Heart left ventricle (tissue), 16 donors: ENCODE measurements at regions of chr1 and their contacts with region 1.

Region 1: DNA sequence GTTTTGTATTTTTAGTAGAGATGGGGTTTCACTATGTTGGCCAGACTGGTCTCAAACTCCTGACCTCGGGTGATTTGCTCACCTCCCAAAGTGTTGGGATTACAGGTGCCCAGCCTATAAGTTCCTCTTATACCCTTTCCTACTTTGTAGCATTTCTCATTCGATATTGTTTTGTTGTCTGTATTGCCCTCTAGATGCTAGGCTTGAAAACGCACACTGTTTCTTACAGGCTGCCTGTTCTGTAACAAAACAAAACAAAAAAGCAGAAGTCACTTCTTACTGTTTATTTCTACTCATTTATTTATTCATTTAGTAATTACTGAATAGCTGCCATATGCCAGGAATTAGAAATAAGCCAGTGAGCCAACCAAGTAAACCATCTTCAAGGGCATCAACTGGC is 136.9 kb upstream of the BMP8A start:
- DNase-seq: no peak
- ATAC-seq: no peak
- H3K4me3 ChIP-seq: no peak overlapping the region
- H3K27ac ChIP-seq: no peak overlapping the region
- H3K4me1 ChIP-seq: peaks cover 0 to 17% (median 9%) of the 10 kb centered on the region in 12 donors
- H3K27me3 ChIP-seq: no peaks in the 10 kb centered on the region
- CTCF ChIP-seq: peak in 1 of 12 donors; percentile 8
- POLR2A ChIP-seq: no peak

Region 2: DNA sequence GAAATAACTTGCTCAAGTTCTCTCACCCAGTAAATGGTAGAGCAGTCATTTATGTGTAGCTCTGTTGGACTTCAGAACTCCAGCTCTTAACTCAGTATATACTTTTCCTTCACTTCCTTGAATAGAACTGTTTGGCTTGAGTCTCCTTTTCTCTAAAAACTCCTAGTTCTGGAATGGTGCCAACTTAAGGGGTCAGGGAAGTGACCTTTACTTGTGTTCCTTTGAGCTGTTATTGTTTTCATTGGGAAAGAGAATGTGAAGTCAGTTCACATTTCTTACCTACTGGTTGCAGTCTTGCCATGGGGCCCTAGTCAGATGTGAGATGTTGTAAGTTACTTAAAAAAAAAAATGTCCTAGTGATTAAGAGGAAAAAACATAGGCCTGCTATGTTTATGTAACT is 227.1 kb before region 1 on chr1:
- intact Hi-C with region 1: no loop called
- DNase-seq: peak in 2 of 5 donors; percentile 31 to 62
- ATAC-seq: peak; percentile 45 to 67 (median 56)
- H3K4me3 ChIP-seq: no peak overlapping the region
- H3K27ac ChIP-seq: peak overlapping the region; percentile 2 to 88 (median 58)
- H3K4me1 ChIP-seq: peaks cover 5 to 64% (median 50%) of the 10 kb centered on the region in 12 donors
- H3K27me3 ChIP-seq: no peaks in the 10 kb centered on the region
- CTCF ChIP-seq: no peak
- POLR2A ChIP-seq: no peak

Region 3: DNA sequence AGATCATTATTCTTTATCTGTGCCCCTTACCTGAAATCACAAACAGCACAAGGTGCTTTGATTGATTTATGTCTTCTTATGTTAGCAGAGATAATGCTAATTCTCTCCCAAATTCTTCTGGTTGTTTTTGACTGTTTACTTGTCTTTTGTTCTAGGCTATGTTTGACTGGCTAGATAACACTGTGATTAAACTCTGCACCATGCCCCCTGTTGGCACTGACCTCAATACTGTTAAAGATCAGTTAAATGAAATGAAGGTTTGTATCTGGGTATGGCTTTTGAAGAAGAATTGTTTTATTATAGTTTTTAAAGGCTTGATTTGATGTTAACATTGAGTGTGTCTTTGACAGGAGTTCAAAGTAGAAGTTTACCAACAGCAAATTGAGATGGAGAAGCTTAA is 87.2 kb after region 1 on chr1:
- intact Hi-C with region 1: loop called in 2 of 10 experiments (anchors 5 to 10 kb)
- DNase-seq: no peak
- ATAC-seq: no peak
- H3K4me3 ChIP-seq: no peak overlapping the region
- H3K27ac ChIP-seq: no peak overlapping the region
- H3K4me1 ChIP-seq: no peaks in the 10 kb centered on the region
- H3K27me3 ChIP-seq: no peaks in the 10 kb centered on the region
- CTCF ChIP-seq: no peak
- POLR2A ChIP-seq: no peak

Region 4: GRCh38 chr1:39446986-39447567 is 92.5 kb after region 1 on chr1:
- intact Hi-C with region 1: loop called in 2 of 10 experiments (anchors 5 to 10 kb)
- DNase-seq: no peak
- ATAC-seq: no peak
- H3K4me3 ChIP-seq: no peak overlapping the region
- H3K27ac ChIP-seq: peak overlapping the region in 1 of 12 donors; percentile 6
- H3K4me1 ChIP-seq: peaks cover 0 to 9% (median 0%) of the 10 kb centered on the region in 12 donors
- H3K27me3 ChIP-seq: no peaks in the 10 kb centered on the region
- CTCF ChIP-seq: no peak
- POLR2A ChIP-seq: no peak